ENCODE measurements at regions of chr9 and their contacts with region 1.

Region 1: GRCh38 chr9:38079461-38080031 is 10.5 kb upstream of the SHB start:
- DNase-seq: no peak
- ATAC-seq: no peak

Region 2: DNA sequence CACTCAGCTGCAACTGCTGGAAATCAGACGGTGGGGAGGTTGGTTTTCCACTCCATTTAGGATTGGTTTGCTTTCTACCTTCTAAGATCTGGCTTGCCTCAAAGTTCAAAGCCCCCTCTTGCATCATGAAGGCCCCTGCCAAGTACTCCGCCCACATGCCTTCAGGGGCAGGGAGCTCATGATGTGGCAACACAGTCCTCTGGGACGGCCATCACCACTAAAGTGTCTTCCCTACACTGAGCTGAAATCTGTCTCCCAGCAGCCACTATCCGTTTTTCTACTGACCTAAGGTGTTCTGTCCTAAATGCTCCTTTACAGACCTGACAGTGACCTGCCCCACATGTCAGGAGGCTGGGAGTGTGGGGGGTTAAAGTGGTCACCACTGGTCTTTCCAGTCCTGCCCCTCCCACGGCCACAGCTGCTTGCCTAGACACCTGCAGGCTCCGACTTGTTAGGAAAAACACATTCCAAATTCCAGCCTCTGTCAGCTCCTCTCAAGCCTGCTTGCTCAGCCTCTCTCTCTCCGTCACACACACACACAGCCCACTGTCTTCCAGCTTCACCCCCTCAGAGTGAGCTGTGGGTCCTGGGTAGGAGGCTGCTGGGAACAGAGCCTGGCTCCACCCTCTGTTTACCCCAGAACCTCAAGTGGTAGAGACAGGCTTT is 55.4 kb before region 1 on chr9:
- intact Hi-C with region 1: no loop called
- DNase-seq: no peak
- ATAC-seq: no peak

Region 3: DNA sequence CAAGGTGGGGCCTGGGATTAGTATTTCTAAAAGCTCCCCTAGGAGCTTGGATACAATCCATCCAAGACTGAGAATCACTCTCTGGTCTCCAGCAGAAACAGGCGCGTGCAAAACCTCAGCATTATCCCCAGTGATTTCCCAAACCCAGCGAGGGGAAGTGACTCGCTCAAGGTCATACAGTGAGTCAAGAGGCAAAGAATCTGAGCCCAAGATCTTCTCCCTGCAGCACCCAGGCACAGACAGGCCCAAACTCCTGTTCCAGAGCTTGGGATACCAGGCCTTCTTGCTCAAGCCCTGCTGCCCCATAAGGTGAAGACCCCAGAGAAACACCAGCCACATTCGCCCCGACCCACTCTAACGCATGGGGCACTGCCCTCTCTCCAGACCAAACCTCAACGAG is 43.7 kb before region 1 on chr9:
- intact Hi-C with region 1: loop called (anchors 5 kb)
- DNase-seq: no peak
- ATAC-seq: no peak

Measured in Right ventricle myocardium inferior (tissue), 1 donor.